Activated naive CD8-positive, alpha-beta T cell treated with anti-CD3 and anti-CD28 coated beads, Interleukin-2, amount 10 ng/mL, durations not matched to agents 7 days and 5 days (primary cell): ENCODE measurements at regions of chr2 and their contacts with region 1.

Region 1: DNA sequence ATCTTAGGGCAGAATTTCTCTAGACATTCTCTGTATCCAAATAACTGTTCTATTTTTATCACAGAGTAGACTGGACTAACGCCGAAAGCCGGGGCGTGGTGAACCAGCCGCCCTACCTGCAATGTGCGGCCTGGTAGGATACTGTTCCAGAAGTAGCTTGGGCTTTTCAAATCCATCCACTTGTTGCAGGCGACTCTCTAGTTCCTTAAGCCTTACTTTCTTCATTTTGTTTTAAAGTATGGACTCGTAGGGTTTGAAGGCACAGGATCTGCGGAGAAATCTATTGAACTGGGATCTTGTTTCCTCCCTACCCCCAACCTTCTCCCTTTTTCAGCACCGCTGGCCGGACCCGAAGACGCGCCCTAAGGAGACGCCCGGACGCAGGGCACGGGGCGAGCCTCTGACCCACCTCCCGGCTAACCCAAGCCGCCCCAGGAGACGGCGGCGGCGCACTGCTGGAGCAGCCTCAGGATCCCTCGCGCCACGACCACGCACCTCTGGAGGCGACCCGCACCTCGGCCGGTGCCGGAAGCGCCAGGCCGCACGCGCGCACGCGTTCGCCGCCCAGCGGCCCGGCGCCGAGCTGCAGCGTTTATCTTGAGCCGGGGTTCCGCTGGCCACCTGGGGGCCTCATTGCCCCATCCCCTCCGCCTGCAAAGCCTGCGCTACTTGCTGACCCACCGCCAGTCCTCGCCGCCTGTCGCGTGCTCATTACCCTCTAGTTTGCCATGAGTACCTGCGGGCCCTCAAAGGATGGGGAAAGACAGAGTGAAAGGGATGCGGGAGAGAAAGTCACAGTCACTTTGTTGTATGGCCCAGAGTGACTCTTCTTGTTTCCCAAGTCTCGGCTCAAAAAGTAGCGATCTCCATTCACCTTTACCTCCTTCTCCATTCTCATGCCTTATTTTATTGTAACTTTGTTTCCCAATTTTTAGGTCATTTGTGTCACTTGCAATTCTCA is at the start of gene METTL5:
- DNase-seq: peak; percentile 90
- ATAC-seq: peak; percentile 69
- H3K4me3 Mint-ChIP-seq: peak within 1 kb of the TSS; percentile 83
- H3K27ac Mint-ChIP-seq: peak within 1 kb of the TSS; percentile 93
- H3K4me1 Mint-ChIP-seq: peaks cover 46% of the 10 kb centered on the region
- H3K27me3 Mint-ChIP-seq: no peaks in the 10 kb centered on the region
- total RNA-seq, gene METTL5: 57.1 to 62.7 TPM

Region 2: DNA sequence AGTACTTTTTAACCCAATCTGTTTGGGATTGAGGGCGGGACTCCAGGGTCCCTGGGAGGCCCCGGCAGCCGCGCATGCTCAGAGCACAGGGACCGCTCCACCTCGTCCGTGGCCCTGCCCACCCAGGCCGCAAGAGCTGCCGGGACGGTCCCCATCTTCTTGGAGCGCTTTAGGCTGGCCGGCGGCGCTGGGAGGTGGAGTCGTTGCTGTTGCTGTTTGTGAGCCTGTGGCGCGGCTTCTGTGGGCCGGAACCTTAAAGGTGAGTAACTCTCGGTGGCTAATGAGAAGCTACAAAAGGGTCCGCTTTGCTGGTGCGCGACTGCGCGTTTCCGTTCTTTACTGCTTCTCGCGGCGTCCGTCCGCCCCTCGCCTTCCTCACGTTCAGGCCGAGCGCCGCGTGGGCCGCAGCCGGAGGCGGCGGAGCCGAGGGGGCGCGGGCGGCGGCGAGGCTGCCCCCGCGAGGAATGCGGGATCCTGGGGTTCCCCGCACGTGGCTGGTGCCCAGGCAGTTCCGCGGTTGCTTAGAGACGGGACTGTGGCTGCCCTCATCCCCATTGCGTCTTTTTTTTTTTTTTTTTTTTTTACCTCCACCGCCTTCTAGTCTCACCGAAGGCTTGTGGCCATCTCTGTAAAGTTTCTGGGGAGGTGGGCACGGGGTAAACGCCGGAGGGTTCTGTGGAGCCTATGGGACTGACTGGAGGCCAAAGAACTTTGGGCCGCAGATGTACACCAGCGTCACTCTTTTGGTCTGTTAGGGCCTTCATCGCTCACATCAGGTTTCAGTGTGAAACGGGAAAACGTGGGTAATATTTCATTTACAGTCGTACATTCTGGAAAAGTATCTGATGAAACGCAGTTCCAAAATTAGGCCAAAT is 25.7 kb before region 1 on chr2 and contains the start of gene SSB:
- POLR2A ChIA-PET with region 1: interaction called, 12 read pairs
- DNase-seq: peak; percentile 91
- ATAC-seq: peak; percentile 98
- H3K4me3 Mint-ChIP-seq: peak within 1 kb of the TSS; percentile 93
- H3K27ac Mint-ChIP-seq: peak within 1 kb of the TSS; percentile 91
- H3K4me1 Mint-ChIP-seq: peaks cover 12% of the 10 kb centered on the region
- H3K27me3 Mint-ChIP-seq: peaks cover 10% of the 10 kb centered on the region
- total RNA-seq, gene SSB: 83.4 to 84.6 TPM

Region 3: DNA sequence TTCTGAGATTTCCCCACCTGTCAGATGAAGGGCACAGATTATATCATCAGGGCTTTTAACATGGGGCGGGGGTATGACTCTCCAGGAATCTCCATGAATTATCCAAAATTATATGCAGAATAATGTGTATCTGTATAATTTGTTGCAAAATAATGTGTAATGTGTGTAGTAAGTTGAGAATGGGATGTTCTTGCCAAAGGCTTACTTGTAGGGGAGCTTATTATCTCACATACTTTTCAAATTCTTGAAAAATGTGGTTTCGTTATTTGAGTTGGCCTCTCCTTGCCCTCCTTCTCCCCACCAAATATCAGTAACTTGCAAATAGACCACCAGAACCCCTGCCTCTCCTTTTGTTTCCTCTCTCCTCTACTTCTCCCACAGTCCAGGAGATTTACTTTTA is 38.2 kb after region 1 on chr2:
- POLR2A ChIA-PET with region 1: no interaction called
- DNase-seq: no peak
- ATAC-seq: no peak
- H3K4me3 Mint-ChIP-seq: no peak overlapping the region
- H3K27ac Mint-ChIP-seq: no peak overlapping the region
- H3K4me1 Mint-ChIP-seq: peaks cover 1% of the 10 kb centered on the region
- H3K27me3 Mint-ChIP-seq: no peaks in the 10 kb centered on the region